ENCODE measurements at regions of chr12 and their contacts with region 1.

Region 1: DNA sequence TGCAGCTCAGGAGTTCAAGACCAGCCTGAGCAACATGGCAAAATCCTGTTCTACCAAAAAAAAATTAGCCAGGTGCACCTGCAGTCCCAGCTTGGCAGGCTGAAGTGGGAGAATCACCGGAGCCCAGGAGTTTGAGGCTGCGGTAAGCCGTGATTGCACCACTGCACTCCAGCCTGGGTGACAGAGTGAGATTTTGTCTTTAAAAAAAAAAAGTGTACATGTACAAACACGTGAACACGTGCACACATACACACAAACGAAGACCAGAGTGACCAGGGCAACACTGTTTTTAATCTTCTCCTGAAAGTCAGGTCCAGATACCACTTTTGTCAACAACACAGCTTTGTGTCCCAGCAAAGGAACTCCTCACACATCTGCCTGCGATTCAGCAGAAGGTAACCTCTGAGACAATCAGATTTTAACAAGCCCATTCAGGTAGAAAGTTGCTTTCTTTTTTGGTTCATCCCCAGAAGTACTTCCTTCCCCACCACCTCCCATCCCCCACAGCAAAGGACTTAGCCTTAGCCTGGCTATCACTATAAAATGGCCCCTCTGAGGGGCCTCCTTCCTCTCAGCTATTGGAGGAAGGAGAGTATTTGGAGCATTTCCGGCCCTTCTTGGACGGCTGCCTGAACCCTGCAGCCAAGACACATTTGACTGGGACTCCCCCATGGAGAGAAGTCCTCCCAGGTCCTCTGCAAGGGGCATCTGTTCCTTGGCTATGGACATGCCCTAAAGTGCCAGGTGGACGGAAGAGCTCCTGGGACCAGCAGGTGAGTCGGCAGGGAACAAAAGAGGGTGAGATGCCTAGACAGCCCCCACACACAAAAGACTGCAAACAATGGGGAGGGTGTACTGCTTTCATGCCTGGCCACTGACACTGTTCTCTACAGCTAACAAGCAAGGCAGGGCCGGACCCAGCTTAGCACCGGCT is 9.8 kb downstream of the CTDSP2 start:
- DNase-seq: peak in 2 of 4 experiments; percentile 78 to 82
- ATAC-seq: peak; percentile 82
- H3K4me3 ChIP-seq: no peak overlapping the region; the same call in 1 of the 2 replicates
- H3K27ac ChIP-seq: peak overlapping the region; percentile 53; the same call in 2 of the 3 replicates
- H3K4me1 ChIP-seq: peaks cover 51 to 53% of the 10 kb centered on the region in 2 experiments
- H3K27me3 ChIP-seq: no peaks in the 10 kb centered on the region
- CTCF ChIP-seq: no peak
- EP300 ChIP-seq: peak; percentile 35; the same call in 1 of the 2 replicates
- POLR2A ChIP-seq: no peak
- RAD21 ChIP-seq: no peak; a peak in 1 of 4 replicates

Region 2: GRCh38 chr12:57401165-57401564 is 435.5 kb before region 1 on chr12:
- CTCF ChIA-PET with region 1: no interaction called
- POLR2A ChIA-PET with region 1: no interaction called
- in situ Hi-C with region 1: no loop called
- intact Hi-C with region 1: no loop called
- DNase-seq: peak in 1 of 4 experiments; percentile 17
- ATAC-seq: peak; percentile 63
- H3K4me3 ChIP-seq: no peak overlapping the region
- H3K27ac ChIP-seq: peak overlapping the region; percentile 25; the same call in 1 of the 3 replicates
- H3K4me1 ChIP-seq: no peaks in the 10 kb centered on the region; a peak in 1 of 5 replicates
- H3K27me3 ChIP-seq: no peaks in the 10 kb centered on the region
- CTCF ChIP-seq: no peak
- EP300 ChIP-seq: no peak
- POLR2A ChIP-seq: no peak
- RAD21 ChIP-seq: no peak

Region 3: GRCh38 chr12:57535764-57536596 is 300.7 kb before region 1 on chr12:
- CTCF ChIA-PET with region 1: no interaction called
- POLR2A ChIA-PET with region 1: no interaction called
- in situ Hi-C with region 1: no loop called
- intact Hi-C with region 1: no loop called
- DNase-seq: no peak
- ATAC-seq: no peak
- H3K4me3 ChIP-seq: no peak overlapping the region
- H3K27ac ChIP-seq: no peak overlapping the region; the same call in 2 of the 3 replicates
- H3K4me1 ChIP-seq: peaks cover 17 to 36% of the 10 kb centered on the region in 2 experiments
- H3K27me3 ChIP-seq: no peaks in the 10 kb centered on the region
- CTCF ChIP-seq: no peak
- EP300 ChIP-seq: no peak
- POLR2A ChIP-seq: no peak
- RAD21 ChIP-seq: no peak

Region 4: DNA sequence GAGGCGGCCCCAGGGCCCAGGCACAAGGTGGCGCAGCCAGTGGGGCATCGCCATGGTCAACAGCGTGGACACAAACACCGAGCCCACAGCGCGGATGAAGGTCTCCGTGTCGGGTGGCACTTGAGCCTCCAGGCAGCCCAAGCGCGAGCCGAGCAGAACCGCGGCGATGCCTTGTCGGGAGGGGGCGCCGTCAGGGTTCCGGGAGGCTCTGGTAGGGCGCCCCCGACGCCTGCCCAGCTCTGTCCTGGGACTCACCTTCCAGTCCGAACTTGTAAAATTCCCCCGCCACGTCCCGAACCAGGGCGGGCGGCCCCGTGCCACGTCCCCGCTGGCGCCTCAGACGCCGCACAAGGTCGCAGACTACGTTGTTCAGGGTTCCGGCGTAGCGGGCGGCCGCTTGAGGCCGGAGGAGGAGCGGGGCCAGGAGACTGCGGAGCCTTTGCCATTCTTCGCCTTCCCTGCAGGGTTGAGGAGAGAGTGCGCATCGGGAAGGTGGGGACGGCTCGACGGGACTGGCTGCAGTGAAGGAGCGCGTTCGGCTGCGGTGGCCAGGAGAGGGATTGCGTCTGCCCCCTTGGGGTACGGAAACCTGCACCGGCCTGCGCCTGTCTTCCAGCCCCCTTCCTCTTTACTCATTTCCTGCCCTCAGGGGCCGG is 71.5 kb before region 1 on chr12:
- CTCF ChIA-PET with region 1: no interaction called
- POLR2A ChIA-PET with region 1: no interaction called
- in situ Hi-C with region 1: no loop called
- intact Hi-C with region 1: no loop called
- DNase-seq: no peak
- ATAC-seq: no peak
- H3K4me3 ChIP-seq: no peak overlapping the region
- H3K27ac ChIP-seq: no peak overlapping the region
- H3K4me1 ChIP-seq: peaks cover 8 to 25% of the 10 kb centered on the region in 2 experiments
- H3K27me3 ChIP-seq: no peaks in the 10 kb centered on the region
- CTCF ChIP-seq: 0 out of 6 replicates have a peak, but pooled peaks of 1 of the 3 experiments have one; percentile 11
- EP300 ChIP-seq: no peak
- POLR2A ChIP-seq: no peak
- RAD21 ChIP-seq: no peak

Region 5: GRCh38 chr12:57822392-57823130 is 14.1 kb before region 1 on chr12:
- CTCF ChIA-PET with region 1: no interaction called
- POLR2A ChIA-PET with region 1: interaction called, 21 read pairs
- in situ Hi-C with region 1: no loop called
- intact Hi-C with region 1: no loop called
- DNase-seq: no peak
- ATAC-seq: no peak
- H3K4me3 ChIP-seq: no peak overlapping the region
- H3K27ac ChIP-seq: no peak overlapping the region
- H3K4me1 ChIP-seq: peaks cover 0 to 2% of the 10 kb centered on the region in 2 experiments; a peak in 2 of 5 replicates
- H3K27me3 ChIP-seq: no peaks in the 10 kb centered on the region
- CTCF ChIP-seq: no peak
- EP300 ChIP-seq: no peak
- POLR2A ChIP-seq: no peak
- RAD21 ChIP-seq: no peak

Region 6: DNA sequence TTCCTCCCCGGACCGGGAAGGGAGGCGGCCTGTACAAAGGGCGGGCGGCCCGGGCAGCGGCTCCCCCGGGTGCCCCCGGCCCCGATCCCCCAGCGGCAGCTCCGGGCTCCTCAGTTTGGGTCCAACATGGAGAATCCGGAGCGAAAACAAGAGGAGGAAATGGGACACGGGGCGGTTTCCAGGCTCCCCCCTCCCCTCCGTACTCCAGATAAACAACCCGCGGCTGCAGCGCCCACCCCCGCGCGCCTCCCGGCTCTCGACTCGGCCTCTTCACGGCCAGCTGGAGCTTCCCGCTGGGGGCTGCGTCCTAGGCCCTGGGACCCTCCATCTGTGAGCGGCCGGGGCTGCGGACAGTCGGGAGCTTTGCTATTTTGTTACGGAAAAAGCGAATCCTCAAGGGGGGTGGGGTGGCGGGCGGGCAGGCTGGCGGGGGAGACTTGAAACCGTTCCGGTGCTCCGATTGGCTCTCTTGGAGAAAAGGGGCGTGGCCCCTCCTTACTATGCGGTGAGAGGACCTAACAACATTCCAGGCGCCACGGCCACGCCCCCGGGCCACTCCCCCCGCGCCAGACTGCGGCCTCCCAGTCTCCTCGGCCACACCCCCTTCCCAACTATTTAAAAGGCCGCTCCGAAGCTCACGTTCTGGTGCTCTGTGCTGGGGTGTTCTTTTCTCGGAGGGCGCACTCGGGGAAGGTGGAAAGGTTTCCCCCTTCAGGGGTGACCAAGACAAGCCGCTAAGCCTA is 10.0 kb after region 1 on chr12 and contains the start of gene CTDSP2:
- CTCF ChIA-PET with region 1: no interaction called
- POLR2A ChIA-PET with region 1: interaction called, 30 read pairs
- in situ Hi-C with region 1: no loop called
- intact Hi-C with region 1: no loop called
- DNase-seq: peak; percentile 99 to 100 (median 100)
- ATAC-seq: peak; percentile 78
- H3K4me3 ChIP-seq: peak within 1 kb of the TSS; percentile 98
- H3K27ac ChIP-seq: peak within 1 kb of the TSS; percentile 97
- H3K4me1 ChIP-seq: peaks cover 38 to 41% of the 10 kb centered on the region in 2 experiments
- H3K27me3 ChIP-seq: no peaks in the 10 kb centered on the region
- CTCF ChIP-seq: 0 out of 6 replicates have a peak, but pooled peaks of 1 of the 3 experiments have one; percentile 1
- EP300 ChIP-seq: peak; percentile 32; the same call in 1 of the 2 replicates
- POLR2A ChIP-seq: peak; percentile 59
- RAD21 ChIP-seq: no peak
- polyA plus RNA-seq, gene CTDSP2: 20.4 to 24.1 TPM

Region 7: DNA sequence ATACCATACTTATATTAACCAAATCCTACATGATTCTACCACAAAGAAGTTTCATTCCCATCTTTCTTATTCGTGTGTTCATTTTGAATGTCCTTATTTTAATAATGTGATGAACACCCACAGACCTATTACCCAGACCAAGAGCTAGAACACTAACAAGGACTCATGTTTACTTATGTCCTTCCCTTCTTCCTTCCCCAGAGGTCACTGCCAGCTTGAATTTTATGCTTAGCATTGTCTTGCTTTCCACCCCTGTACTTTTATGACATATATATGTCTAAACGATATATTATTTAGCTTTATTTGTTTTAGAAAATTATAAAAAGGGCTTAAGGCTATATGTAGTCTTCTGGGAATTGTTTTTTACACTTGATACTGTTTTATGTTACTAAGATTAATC is 845.0 kb after region 1 on chr12:
- CTCF ChIA-PET with region 1: no interaction called
- POLR2A ChIA-PET with region 1: no interaction called
- in situ Hi-C with region 1: no loop called
- intact Hi-C with region 1: no loop called
- DNase-seq: no peak
- ATAC-seq: no peak
- H3K4me3 ChIP-seq: no peak overlapping the region
- H3K27ac ChIP-seq: no peak overlapping the region
- H3K4me1 ChIP-seq: no peaks in the 10 kb centered on the region
- H3K27me3 ChIP-seq: no peaks in the 10 kb centered on the region
- CTCF ChIP-seq: no peak
- EP300 ChIP-seq: no peak
- POLR2A ChIP-seq: no peak
- RAD21 ChIP-seq: no peak